ENCODE measurements at regions of chr19 and their contacts with region 1.

Region 1: DNA sequence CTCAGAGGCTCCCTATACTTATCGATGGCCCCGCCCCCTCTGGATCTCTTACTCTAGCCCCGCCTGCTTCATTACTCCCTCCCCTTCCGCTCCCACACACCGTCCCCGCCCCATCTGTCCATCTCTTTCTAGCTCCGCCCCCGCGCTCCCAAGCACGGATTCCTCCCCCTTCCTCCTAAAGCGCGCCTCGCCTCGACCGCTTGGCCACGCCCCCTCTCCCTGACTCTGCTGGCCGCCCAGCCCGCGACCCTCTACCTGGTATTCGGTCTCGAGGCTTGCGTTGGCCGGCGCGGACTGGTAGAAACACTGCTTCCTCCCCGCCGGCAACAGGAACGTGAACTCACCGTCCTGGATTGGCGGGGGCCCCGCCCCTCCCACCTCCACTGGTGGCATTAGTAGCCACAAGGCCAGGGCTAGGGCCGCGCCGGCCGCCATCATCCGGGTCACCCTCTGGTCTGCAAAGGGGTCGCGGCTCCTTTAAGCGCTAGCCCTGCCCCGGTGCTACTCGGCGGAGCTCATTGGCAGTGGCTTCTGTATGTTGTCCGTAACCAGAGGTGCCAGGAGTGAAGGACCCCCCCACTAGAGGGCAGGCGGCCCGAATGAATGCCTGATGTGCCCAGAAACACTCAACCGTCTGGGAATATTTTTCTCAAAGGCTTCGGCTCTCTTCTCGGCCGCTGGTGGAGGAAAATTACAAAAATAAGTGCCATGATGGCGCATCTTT is at the start of gene TMED1:
- DNase-seq: peak; percentile 99 to 100 (median 100)
- H3K4me3 ChIP-seq: peak within 1 kb of the TSS; percentile 74 to 91 (median 82)
- H3K27ac ChIP-seq: peak within 1 kb of the TSS; percentile 99 to 100
- H3K4me1 ChIP-seq: peaks cover 0 to 15% (median 14%) of the 10 kb centered on the region in 4 experiments
- H3K27me3 ChIP-seq: no peaks in the 10 kb centered on the region

Region 2: GRCh38 chr19:10820173-10820572 is 15.7 kb before region 1 on chr19:
- CTCF ChIA-PET with region 1: interaction called, 12 read pairs
- POLR2A ChIA-PET with region 1: interaction called, 4 read pairs
- DNase-seq: no peak
- H3K4me3 ChIP-seq: no peak overlapping the region
- H3K27ac ChIP-seq: no peak overlapping the region
- H3K4me1 ChIP-seq: peaks cover 0 to 10% (median 4%) of the 10 kb centered on the region in 4 experiments
- H3K27me3 ChIP-seq: no peaks in the 10 kb centered on the region

Region 3: GRCh38 chr19:10858204-10858828 is 22.4 kb after region 1 on chr19:
- CTCF ChIA-PET with region 1: interaction called, 18 read pairs
- POLR2A ChIA-PET with region 1: no interaction called
- DNase-seq: peak; percentile 55 to 67 (median 63)
- H3K4me3 ChIP-seq: no peak overlapping the region
- H3K27ac ChIP-seq: no peak overlapping the region
- H3K4me1 ChIP-seq: no peaks in the 10 kb centered on the region
- H3K27me3 ChIP-seq: no peaks in the 10 kb centered on the region

Region 4: DNA sequence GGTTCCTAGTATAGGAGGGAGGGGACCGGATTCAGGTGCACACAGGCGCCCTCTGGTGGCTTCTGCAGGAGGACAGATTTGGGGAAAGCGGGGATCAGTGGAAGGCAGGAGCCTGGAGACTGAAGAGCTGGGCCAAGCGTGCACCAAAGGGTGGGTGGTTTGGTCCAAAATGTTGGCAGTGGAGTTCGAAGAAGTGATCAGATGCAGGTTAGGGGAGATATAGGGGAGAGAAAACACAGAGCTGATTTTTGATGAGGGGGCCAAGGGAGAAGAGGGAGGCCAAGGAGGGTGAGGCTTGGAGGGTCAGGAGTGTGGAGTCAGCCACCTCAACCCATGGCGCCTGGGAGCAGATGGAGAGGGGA is 28.6 kb after region 1 on chr19:
- CTCF ChIA-PET with region 1: interaction called, 31 read pairs
- POLR2A ChIA-PET with region 1: no interaction called
- DNase-seq: peak; percentile 66 to 77 (median 71)
- H3K4me3 ChIP-seq: peak overlapping the region in 1 of 7 experiments; percentile 40
- H3K27ac ChIP-seq: no peak overlapping the region
- H3K4me1 ChIP-seq: peaks cover 0 to 4% (median 3%) of the 10 kb centered on the region in 4 experiments
- H3K27me3 ChIP-seq: no peaks in the 10 kb centered on the region

Region 5: DNA sequence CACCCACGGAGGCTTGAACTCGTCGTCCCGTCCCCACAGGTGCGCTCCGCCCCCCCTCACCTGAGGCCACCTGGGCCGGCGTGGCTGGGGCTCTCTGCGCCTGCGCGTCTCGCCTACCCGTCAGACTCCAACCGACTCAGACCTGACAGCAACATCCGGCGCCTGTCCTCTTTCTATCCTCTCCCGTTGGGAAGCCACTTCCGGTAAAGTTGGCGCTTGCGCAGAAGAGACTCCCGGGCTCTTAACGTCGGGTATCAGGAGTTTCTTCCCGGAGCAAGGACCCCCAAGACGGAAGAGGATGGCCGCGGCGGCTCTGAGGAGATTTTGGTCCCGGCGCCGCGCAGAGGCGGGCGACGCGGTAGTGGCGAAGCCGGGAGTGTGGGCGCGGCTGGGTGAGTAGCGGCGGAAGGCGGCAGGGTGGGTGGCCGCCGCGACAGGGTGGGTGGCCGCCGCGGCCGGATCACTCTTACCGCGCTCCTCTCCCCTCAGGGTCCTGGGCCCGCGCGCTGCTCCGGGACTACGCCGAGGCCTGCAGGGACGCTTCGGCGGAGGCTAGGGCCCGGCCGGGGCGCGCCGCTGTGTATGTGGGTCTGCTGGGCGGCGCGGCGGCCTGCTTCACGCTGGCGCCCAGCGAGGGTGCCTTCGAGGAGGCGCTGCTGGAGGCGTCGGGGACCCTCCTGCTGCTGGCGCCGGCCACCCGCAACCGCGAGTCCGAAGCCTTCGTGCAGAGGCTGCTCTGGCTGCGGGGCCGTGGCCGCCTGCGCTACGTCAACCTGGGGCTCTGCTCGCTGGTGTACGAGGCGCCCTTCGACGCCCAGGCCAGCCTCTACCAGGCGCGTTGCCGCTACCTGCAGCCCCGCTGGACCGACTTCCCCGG is 92.8 kb after region 1 on chr19 and contains the starts of genes TIMM29 and YIPF2:
- CTCF ChIA-PET with region 1: no interaction called
- POLR2A ChIA-PET with region 1: no interaction called
- DNase-seq: peak; percentile 86 to 93 (median 89)
- H3K4me3 ChIP-seq: peak within 1 kb of the TSS; percentile 77 to 97 (median 86)
- H3K27ac ChIP-seq: peak within 1 kb of the TSS; percentile 33 to 81
- H3K4me1 ChIP-seq: peaks cover 0 to 23% (median 21%) of the 10 kb centered on the region in 4 experiments
- H3K27me3 ChIP-seq: no peaks in the 10 kb centered on the region

Measured in common myeloid progenitor, CD34-positive (primary cell).